Activated CD4-positive, alpha-beta T cell treated with anti-CD3 and anti-CD28 coated beads for 36 hours (primary cell): ENCODE measurements at regions of chr11 and their contacts with region 1.

Region 1: GRCh38 chr11:40227730-40228129 is 1231.7 kb downstream of the LRRC4C start:
- DNase-seq: no peak
- ATAC-seq: no peak
- H3K4me3 Mint-ChIP-seq: no peak overlapping the region
- H3K27ac Mint-ChIP-seq: no peak overlapping the region
- H3K4me1 Mint-ChIP-seq: no peaks in the 10 kb centered on the region
- H3K27me3 Mint-ChIP-seq: no peaks in the 10 kb centered on the region

Region 2: GRCh38 chr11:39932966-39933365 is 294.8 kb before region 1 on chr11:
- CTCF ChIA-PET with region 1: no interaction called
- POLR2A ChIA-PET with region 1: no interaction called
- intact Hi-C with region 1: loop called in 1 of 2 experiments (anchors 5 kb)
- DNase-seq: no peak
- ATAC-seq: no peak
- H3K4me3 Mint-ChIP-seq: no peak overlapping the region
- H3K27ac Mint-ChIP-seq: no peak overlapping the region
- H3K4me1 Mint-ChIP-seq: no peaks in the 10 kb centered on the region
- H3K27me3 Mint-ChIP-seq: no peaks in the 10 kb centered on the region

Region 3: GRCh38 chr11:40168461-40168860 is 59.3 kb before region 1 on chr11:
- CTCF ChIA-PET with region 1: no interaction called
- POLR2A ChIA-PET with region 1: no interaction called
- intact Hi-C with region 1: no loop called
- DNase-seq: no peak
- ATAC-seq: no peak
- H3K4me3 Mint-ChIP-seq: no peak overlapping the region
- H3K27ac Mint-ChIP-seq: no peak overlapping the region
- H3K4me1 Mint-ChIP-seq: no peaks in the 10 kb centered on the region
- H3K27me3 Mint-ChIP-seq: no peaks in the 10 kb centered on the region

Region 4: GRCh38 chr11:40215556-40215955 is 12.2 kb before region 1 on chr11:
- CTCF ChIA-PET with region 1: no interaction called
- POLR2A ChIA-PET with region 1: no interaction called
- intact Hi-C with region 1: no loop called
- DNase-seq: no peak
- ATAC-seq: no peak
- H3K4me3 Mint-ChIP-seq: no peak overlapping the region
- H3K27ac Mint-ChIP-seq: no peak overlapping the region
- H3K4me1 Mint-ChIP-seq: no peaks in the 10 kb centered on the region
- H3K27me3 Mint-ChIP-seq: no peaks in the 10 kb centered on the region